WTC11 (cell line): ENCODE measurements at regions of chr19 and their contacts with region 1.

Region 1: DNA sequence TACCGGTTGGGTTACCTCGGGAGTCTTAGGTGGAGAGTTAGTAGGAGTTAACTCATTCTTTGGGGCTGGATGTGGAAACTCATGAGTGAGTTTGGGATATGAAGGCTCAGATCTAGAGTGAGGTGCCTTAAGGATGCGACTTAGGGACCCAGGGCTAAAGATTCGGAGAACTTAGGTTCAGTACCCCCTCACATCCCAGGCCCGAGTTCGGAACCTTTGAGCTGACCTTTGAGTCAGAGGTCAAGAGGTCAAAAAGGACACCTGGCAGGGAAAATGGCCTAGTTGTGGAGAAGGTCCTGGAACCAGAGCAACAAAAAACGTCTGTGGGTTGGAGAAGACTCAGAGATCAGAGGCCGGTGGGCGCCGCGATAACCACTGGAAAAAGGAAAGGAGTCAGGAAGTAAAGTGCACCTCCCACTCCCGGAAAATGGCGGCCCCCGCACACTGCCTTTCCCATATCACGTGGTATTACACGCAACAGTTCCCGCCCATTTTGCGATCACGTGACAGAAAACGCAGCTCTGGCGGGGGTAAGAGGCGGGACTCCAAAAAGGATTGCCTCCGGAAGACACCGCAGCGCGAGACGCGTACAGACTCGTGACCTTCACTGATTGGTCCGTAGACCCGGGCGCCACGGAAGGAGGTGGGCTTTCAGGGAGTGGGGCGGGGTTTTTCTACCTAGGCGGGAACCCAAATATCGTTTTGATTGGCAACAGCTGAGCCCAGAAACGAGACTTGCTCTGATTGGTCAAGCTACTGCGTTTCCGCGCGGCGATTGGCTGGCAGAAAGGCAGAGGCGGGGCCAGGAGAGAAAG is at the start of gene ACTMAP:
- DNase-seq: peak; percentile 99
- ATAC-seq: peak; percentile 93
- H3K4me3 Mint-ChIP-seq: peak within 1 kb of the TSS; percentile 99
- H3K27ac Mint-ChIP-seq: peak within 1 kb of the TSS; percentile 100
- H3K4me1 Mint-ChIP-seq: peaks cover 38% of the 10 kb centered on the region
- H3K27me3 Mint-ChIP-seq: no peaks in the 10 kb centered on the region
- CTCF ChIP-seq: no peak
- total RNA-seq, gene ACTMAP: 29.6 to 42.4 TPM (median 40.2 TPM) in 3 replicates

Region 2: DNA sequence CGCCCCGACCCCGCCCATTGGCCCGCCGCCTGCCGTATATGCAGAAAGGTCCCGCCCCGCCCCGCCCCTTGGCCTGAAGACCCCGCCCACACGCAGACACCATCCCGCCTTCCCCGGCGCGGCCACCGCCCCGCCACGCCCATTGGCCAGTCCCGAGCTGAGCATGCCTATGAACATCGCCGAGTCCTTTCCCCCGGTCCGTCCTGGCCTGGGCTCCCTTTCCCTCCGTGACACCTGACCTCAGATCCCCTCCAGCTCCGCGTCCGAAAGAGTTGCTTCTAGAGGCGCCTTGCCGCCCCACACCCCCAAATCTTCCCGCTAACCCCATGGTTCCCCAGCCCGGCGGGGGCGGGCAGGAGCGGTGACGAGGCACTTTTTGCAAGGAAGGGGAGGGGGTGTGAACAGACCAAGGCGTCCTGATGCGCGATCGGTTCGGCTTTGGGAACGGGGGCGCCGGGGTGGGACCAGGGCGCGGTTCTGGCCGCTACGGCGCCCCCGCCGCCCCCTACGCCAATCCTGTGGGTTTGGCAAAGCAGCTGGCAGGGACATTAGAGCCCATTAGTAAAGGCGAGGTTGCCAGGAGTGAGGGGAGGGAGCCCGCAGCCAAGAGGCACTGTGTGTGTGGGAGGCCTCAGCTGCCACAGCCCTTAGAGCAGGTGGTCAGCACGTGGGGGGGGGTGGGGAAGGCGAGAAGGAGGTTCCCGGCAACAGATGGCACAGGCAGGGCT is 59.4 kb before region 1 on chr19:
- CTCF ChIA-PET with region 1: no interaction called
- POLR2A ChIA-PET with region 1: interaction called, 10 read pairs
- DNase-seq: peak; percentile 91
- ATAC-seq: peak; percentile 83
- H3K4me3 Mint-ChIP-seq: peak overlapping the region; percentile 86
- H3K27ac Mint-ChIP-seq: peak overlapping the region; percentile 95
- H3K4me1 Mint-ChIP-seq: peaks cover 6% of the 10 kb centered on the region
- H3K27me3 Mint-ChIP-seq: no peaks in the 10 kb centered on the region
- CTCF ChIP-seq: no peak

Region 3: DNA sequence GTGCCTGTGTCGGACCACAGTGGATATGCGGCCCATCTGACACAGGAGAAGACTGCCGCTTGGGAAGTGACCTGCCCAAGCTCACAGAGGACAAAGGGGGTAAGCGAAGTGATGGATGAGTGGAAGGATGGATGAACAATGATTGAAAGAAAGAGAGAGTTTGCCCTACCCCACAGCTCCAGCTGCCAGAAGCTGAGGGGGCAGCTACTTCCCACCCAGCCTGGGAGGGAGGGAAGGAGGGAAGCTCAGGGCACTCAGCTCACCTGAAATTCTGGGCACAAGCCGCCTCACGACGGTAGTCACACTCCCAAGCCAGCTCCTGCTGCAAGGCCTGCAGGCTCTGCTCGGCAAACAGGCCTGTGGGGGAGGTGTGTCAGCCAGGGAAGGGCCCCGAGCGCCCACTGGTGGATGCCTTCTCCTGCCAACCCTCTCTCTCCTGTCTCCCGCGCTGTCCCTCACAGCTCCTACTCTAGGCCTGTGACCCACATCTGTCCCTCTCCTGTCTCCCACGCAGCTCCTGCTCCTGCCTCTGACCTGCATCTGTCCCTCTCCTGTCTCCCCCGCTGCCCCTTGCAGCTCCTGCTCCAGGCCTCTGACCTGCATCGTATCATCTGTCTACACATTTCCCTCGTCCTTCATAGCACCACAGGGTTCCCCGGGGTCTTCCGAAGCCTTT is 47.8 kb before region 1 on chr19:
- CTCF ChIA-PET with region 1: interaction called, 20 read pairs
- POLR2A ChIA-PET with region 1: no interaction called
- DNase-seq: peak; percentile 78
- ATAC-seq: peak; percentile 95
- H3K4me3 Mint-ChIP-seq: no peak overlapping the region
- H3K27ac Mint-ChIP-seq: peak overlapping the region; percentile 85
- H3K4me1 Mint-ChIP-seq: peaks cover 8% of the 10 kb centered on the region; the same call in 1 of the 2 replicates
- H3K27me3 Mint-ChIP-seq: no peaks in the 10 kb centered on the region
- CTCF ChIP-seq: peak; percentile 18; the same call in 1 of the 2 replicates

Region 4: DNA sequence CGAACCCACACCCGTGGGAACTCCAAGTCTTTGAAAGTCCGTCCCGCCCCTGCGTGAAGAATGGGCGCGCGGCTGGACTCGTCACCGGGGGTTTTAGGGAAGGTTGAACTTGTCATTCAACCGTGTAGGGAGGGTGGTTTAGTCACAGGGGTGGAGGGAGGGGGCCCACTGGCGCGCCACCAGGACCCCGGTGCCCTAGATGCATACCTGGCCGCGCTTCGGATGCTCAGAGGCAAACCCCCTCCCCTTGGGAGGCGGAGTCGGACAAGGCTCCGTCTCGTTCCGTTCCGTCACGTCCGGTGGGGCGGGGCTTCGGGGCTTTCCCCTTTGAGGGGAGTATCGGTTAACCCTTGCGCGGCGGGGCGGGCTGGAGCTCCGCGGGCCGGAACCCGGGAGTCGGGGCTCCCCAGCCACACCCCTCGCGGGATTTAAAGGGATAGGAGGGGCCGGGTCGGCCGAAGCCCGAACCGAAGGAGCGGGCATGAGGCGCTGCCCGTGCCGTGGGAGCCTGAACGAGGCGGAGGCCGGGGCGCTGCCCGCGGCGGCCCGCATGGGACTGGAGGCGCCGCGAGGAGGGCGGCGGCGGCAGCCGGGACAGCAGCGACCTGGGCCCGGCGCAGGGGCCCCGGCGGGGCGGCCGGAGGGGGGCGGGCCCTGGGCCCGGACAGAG is 33.5 kb before region 1 on chr19 and contains the starts of genes COQ8B and ITPKC:
- CTCF ChIA-PET with region 1: interaction called, 6 read pairs
- POLR2A ChIA-PET with region 1: interaction called, 14 read pairs
- DNase-seq: peak; percentile 100
- ATAC-seq: peak; percentile 55
- H3K4me3 Mint-ChIP-seq: peak within 1 kb of the TSS; percentile 98
- H3K27ac Mint-ChIP-seq: peak within 1 kb of the TSS; percentile 99
- H3K4me1 Mint-ChIP-seq: peaks cover 33% of the 10 kb centered on the region
- H3K27me3 Mint-ChIP-seq: no peaks in the 10 kb centered on the region
- CTCF ChIP-seq: no peak
- total RNA-seq, gene COQ8B: 55.6 to 62.9 TPM (median 59.9 TPM) in 3 replicates
- total RNA-seq, gene ITPKC: 10.4 to 13.8 TPM (median 10.6 TPM) in 3 replicates

Region 5: DNA sequence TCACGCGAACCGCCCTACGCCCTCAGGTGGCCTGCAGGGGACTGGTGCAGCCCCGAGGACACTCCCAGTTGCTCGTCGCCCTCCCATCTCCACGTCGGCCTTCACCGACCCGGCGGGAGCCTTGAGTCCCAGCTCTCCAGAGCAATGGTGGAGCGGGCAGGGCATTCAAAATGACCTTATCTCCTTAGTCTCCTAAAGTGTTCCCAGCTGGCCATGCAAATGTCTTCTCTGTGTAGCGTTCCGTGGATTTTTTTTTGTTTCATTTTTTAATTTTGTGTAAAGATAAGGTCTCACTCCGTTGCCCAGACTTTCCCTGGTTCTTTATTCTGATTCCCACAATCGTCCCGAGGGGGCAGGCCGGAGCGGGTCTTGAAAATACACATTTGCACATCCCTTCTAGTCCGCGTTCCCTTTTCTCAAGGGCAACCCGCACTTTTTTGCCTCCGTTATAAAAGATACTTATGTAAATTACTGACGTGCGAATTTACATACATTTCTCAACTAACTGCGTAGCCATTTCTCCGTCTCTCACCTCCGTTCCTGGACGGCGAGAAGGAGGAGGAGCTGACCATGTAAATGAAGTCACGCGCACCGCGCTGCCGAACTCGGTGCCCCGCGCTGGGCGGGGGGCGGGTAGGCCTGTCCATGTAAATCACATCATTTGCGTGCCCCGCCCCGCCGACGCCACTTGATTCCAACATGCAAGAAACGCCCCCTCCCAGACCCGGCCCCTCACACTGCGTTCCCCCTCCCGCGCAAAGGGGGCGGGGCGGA is 48.1 kb after region 1 on chr19:
- CTCF ChIA-PET with region 1: interaction called, 13 read pairs
- POLR2A ChIA-PET with region 1: interaction called, 19 read pairs
- DNase-seq: peak; percentile 100
- ATAC-seq: peak; percentile 80
- H3K4me3 Mint-ChIP-seq: peak overlapping the region; percentile 86
- H3K27ac Mint-ChIP-seq: peak overlapping the region; percentile 98
- H3K4me1 Mint-ChIP-seq: peaks cover 35% of the 10 kb centered on the region
- H3K27me3 Mint-ChIP-seq: no peaks in the 10 kb centered on the region
- CTCF ChIP-seq: no peak

Region 6: DNA sequence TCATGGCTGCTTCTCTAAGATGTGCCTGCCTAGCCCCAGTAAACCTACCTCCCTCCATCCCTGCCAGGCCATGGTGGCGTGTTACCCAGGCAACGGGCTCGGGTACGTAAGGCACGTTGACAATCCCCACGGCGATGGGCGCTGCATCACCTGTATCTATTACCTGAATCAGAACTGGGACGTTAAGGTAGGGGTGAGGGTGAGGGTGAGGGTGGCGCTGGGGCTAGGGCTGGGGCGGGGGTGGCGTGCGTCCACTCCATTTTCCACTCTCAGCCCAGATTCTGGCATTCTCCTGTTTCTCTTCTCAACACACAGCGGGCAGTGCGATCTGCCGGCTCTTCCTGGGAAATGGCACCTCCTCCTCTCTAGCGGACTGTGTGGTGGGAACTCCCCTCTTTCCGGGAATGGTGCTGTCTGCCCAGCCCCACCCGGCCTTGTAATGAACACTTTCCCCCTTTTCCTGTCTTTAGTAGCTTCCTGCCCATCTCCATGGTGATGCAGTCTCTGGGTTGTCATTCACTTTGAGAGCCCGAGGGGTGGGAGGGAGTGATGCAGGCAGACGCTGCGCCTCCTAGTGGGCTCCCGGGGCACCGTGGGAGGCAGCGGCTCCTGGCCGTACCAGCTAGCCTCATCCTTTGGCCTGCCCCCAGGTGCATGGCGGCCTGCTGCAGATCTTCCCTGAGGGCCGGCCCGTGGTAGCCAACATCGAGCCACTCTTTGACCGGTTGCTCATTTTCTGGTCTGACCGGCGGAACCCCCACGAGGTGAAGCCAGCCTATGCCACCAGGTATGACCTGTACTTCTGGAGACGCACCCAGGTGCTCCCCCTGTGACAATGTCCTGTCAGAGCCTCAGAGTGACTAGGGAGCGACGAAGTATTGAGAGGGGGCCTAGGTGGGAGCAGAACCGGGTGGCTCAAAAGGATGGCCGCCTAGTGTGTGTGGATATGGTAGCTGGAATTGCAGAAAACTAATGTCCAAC is 56.5 kb after region 1 on chr19:
- CTCF ChIA-PET with region 1: interaction called, 27 read pairs
- POLR2A ChIA-PET with region 1: interaction called, 15 read pairs
- DNase-seq: peak; percentile 96
- ATAC-seq: peak; percentile 60
- H3K4me3 Mint-ChIP-seq: peak overlapping the region; percentile 39
- H3K27ac Mint-ChIP-seq: peak overlapping the region; percentile 85
- H3K4me1 Mint-ChIP-seq: peaks cover 73% of the 10 kb centered on the region
- H3K27me3 Mint-ChIP-seq: no peaks in the 10 kb centered on the region; the same call in 1 of the 2 replicates
- CTCF ChIP-seq: peak; percentile 77

Region 7: DNA sequence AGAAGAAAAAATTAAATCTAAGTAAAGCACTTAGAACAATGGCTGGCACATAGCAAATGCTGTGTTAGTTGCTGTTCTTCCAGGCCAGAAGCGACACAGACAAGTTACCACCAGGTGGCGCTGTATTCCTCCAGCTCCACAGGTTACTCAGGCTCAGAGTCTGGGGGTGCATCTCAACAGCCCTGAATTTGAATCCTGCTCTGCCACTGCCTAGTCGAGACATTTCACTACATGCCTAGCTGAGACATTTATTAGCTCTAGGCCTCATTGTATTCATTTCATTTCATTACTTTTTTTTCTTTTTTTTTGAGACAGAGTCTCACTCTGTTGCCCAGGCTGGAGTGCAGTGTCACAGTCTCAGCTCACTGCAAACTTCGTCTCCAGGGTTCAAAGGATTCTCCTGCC is 224.4 kb after region 1 on chr19:
- CTCF ChIA-PET with region 1: no interaction called
- POLR2A ChIA-PET with region 1: no interaction called
- DNase-seq: peak; percentile 84
- ATAC-seq: peak; percentile 91
- H3K4me3 Mint-ChIP-seq: no peak overlapping the region
- H3K27ac Mint-ChIP-seq: no peak overlapping the region
- H3K4me1 Mint-ChIP-seq: peaks cover 6% of the 10 kb centered on the region
- H3K27me3 Mint-ChIP-seq: peaks cover 26% of the 10 kb centered on the region
- CTCF ChIP-seq: peak; percentile 95